ENCODE measurements at regions of chr4 and their contacts with region 1.

Region 1: GRCh38 chr4:167492007-167492406 is 257.7 kb upstream of the SPOCK3 start:
- DNase-seq: no peak
- ATAC-seq: no peak
- H3K4me3 ChIP-seq: no peak overlapping the region
- H3K4me3 Mint-ChIP-seq: no peak overlapping the region
- H3K27ac ChIP-seq: no peak overlapping the region
- H3K27ac Mint-ChIP-seq: no peak overlapping the region
- H3K4me1 ChIP-seq: no peaks in the 10 kb centered on the region
- H3K4me1 Mint-ChIP-seq: peaks cover 0 to 2% (median 0%) of the 10 kb centered on the region in 7 donors
- H3K27me3 ChIP-seq: no peaks in the 10 kb centered on the region
- H3K27me3 Mint-ChIP-seq: no peaks in the 10 kb centered on the region

Region 2: DNA sequence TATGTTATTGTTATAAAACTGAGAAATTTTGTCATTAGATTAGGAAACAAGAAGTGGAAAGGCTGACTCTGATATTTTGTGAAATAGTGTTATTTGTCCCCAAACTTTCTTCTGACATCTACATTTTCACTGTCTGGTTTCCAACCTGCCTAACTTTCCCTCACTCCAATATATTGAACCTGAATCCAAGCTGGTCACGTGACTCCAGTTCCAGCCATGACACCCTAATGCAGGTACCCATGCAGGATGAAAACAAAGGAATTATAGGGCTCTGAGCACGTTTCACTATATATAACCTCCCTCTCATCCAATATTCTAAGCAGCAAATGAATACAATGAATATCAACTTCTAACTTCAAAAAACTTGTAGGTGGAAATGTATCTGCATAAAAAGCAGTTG is 1387.4 kb before region 1 on chr4:
- CTCF ChIA-PET with region 1: no interaction called
- POLR2A ChIA-PET with region 1: no interaction called
- intact Hi-C with region 1: loop called in 1 of 2 experiments (anchors 5 kb)
- DNase-seq: no peak
- ATAC-seq: no peak
- H3K4me3 ChIP-seq: no peak overlapping the region
- H3K4me3 Mint-ChIP-seq: no peak overlapping the region
- H3K27ac ChIP-seq: no peak overlapping the region
- H3K27ac Mint-ChIP-seq: no peak overlapping the region
- H3K4me1 ChIP-seq: no peaks in the 10 kb centered on the region
- H3K4me1 Mint-ChIP-seq: no peaks in the 10 kb centered on the region
- H3K27me3 ChIP-seq: no peaks in the 10 kb centered on the region
- H3K27me3 Mint-ChIP-seq: no peaks in the 10 kb centered on the region

Region 3: DNA sequence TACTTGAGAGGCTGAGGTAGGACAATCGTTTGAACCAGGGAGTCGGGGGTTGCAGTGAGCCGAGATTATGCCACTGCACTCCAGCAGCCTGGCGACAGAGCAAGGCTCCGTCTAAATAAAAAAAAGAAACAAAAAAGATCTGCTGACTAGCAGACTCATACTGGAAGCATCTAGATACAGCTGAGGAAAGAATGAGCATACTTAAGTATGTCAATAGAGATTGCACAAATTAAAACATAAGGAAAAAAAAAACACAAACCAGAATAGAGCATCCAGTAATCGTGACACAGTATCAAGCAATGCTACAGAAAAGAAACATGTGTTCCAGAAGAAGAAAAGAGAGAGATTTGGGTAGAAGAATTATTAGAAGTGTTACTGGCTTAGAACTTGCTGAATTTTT is 152.2 kb before region 1 on chr4:
- CTCF ChIA-PET with region 1: no interaction called
- POLR2A ChIA-PET with region 1: no interaction called
- intact Hi-C with region 1: no loop called
- DNase-seq: no peak
- ATAC-seq: no peak
- H3K4me3 ChIP-seq: no peak overlapping the region
- H3K4me3 Mint-ChIP-seq: no peak overlapping the region
- H3K27ac ChIP-seq: no peak overlapping the region
- H3K27ac Mint-ChIP-seq: no peak overlapping the region
- H3K4me1 ChIP-seq: no peaks in the 10 kb centered on the region
- H3K4me1 Mint-ChIP-seq: no peaks in the 10 kb centered on the region
- H3K27me3 ChIP-seq: no peaks in the 10 kb centered on the region
- H3K27me3 Mint-ChIP-seq: no peaks in the 10 kb centered on the region

Region 4: DNA sequence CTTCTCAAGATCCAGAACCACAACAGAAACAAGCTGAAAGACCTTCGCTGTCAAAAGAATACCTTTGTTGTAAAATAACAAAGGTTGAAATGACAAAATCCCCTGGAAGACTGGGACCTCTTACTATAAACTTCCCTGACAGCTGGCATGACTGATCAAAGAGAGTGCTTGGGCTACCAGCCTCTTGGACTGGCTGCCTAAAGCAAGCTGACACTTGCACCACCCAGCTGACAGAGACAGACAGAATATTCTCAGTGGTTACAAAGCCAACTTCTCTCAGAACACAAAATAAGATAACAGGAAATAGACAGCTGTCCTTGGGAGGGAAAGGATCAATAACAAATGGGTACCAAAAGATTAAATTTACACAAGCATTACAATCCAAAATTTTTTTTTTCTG is 16.1 kb before region 1 on chr4:
- CTCF ChIA-PET with region 1: no interaction called
- POLR2A ChIA-PET with region 1: no interaction called
- intact Hi-C with region 1: no loop called
- DNase-seq: no peak
- ATAC-seq: no peak
- H3K4me3 ChIP-seq: no peak overlapping the region
- H3K4me3 Mint-ChIP-seq: no peak overlapping the region
- H3K27ac ChIP-seq: no peak overlapping the region
- H3K27ac Mint-ChIP-seq: no peak overlapping the region
- H3K4me1 ChIP-seq: no peaks in the 10 kb centered on the region
- H3K4me1 Mint-ChIP-seq: no peaks in the 10 kb centered on the region
- H3K27me3 ChIP-seq: no peaks in the 10 kb centered on the region
- H3K27me3 Mint-ChIP-seq: no peaks in the 10 kb centered on the region

Region 5: DNA sequence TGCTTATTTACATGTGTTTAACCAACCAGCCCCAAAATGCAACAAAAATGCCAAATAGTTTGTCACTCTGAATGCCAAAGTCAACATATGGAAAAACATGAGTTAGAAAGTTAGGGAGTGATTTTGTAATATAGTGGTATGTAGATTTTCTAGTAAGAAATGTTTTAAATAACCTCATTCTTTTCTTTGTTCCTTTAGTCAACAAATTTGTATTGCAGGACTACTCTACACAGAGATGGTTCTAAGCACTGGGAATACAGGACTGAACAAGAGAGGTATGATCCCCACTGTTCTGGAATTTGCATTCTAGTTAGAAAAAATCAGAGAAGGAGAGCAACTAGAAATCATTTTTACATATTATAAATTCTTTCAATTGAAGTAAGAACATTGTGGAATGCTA is 381.5 kb after region 1 on chr4:
- CTCF ChIA-PET with region 1: no interaction called
- POLR2A ChIA-PET with region 1: no interaction called
- intact Hi-C with region 1: no loop called
- DNase-seq: no peak
- ATAC-seq: no peak
- H3K4me3 ChIP-seq: no peak overlapping the region
- H3K4me3 Mint-ChIP-seq: no peak overlapping the region
- H3K27ac ChIP-seq: no peak overlapping the region
- H3K27ac Mint-ChIP-seq: no peak overlapping the region
- H3K4me1 ChIP-seq: no peaks in the 10 kb centered on the region
- H3K4me1 Mint-ChIP-seq: no peaks in the 10 kb centered on the region
- H3K27me3 ChIP-seq: no peaks in the 10 kb centered on the region
- H3K27me3 Mint-ChIP-seq: no peaks in the 10 kb centered on the region

Measured in naive thymus-derived CD4-positive, alpha-beta T cell (primary cell).